AG04449 (cell line): ENCODE measurements at regions of chr19 and their contacts with region 1.

Region 1: DNA sequence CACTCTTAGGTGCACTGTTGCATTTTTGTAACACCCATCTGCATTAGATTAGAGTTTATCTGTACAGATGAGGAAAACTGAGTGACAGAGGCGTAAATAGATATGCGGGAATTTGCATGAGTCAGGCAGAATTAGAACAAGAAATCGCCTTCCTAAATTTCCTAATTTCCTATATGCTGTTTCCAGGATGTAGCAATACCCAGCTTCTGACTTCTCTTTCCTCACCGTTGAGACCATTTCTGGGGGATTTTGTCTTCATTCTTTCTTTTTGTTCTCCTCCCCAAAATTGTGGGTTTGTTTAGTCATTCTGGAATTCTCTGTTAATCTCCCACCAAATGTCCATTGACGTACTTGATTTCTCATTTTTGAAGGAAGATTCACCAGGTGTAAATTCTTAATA is 10.6 kb upstream of the ZNF792 start:
- DNase-seq: no peak
- H3K4me3 ChIP-seq: no peak overlapping the region
- CTCF ChIP-seq: no peak

Region 2: DNA sequence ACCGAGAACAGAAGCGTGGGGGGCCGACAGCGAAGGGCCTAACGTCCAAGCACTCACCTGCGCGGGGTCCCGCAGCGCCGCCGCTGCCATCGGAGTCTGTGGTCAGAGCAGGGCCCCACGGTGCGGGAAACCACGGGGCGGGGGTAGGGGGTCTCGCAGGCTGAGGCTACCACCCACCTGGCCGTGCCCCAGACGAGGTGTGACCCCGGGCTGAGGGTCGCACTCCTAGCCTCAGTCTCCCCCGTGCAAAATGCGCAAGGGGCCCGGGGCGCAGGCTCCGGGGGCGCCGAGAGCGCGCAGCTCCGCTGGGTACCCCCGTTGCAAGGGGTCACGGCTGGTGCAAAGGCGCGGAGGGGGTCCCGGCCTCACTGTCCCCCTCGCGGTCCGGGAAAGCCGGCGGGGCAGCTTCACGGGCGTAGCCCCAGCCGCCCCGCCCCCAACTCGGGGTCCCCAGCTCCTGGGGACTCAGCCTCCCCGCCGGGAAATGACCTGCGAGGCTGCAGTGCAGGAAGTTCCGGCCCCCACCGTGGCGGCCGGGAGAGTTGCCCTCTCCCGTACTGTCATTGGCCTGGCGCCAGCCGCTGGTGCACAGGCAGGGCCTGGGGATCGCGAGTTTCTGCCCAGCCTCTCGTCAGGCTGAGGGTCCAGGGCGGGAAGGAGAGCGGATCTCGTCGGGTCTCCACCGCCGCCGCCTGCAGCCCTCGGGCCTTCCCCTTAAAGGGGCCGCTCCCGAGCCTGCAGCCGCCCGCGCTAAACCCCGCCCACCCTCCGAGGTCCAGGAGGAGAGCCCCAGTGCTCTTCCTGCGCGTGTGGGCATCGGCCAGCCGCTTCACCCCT is 10.9 kb before region 1 on chr19 and contains the start of gene ZNF792:
- CTCF ChIA-PET with region 1: interaction called, 35 read pairs
- POLR2A ChIA-PET with region 1: no interaction called
- DNase-seq: no peak
- H3K4me3 ChIP-seq: peak within 1 kb of the TSS; percentile 75
- CTCF ChIP-seq: no peak

Region 3: GRCh38 chr19:34985249-34986022 is 10.8 kb after region 1 on chr19:
- CTCF ChIA-PET with region 1: interaction called, 19 read pairs
- POLR2A ChIA-PET with region 1: no interaction called
- DNase-seq: no peak
- H3K4me3 ChIP-seq: no peak overlapping the region
- CTCF ChIP-seq: no peak

Region 4: DNA sequence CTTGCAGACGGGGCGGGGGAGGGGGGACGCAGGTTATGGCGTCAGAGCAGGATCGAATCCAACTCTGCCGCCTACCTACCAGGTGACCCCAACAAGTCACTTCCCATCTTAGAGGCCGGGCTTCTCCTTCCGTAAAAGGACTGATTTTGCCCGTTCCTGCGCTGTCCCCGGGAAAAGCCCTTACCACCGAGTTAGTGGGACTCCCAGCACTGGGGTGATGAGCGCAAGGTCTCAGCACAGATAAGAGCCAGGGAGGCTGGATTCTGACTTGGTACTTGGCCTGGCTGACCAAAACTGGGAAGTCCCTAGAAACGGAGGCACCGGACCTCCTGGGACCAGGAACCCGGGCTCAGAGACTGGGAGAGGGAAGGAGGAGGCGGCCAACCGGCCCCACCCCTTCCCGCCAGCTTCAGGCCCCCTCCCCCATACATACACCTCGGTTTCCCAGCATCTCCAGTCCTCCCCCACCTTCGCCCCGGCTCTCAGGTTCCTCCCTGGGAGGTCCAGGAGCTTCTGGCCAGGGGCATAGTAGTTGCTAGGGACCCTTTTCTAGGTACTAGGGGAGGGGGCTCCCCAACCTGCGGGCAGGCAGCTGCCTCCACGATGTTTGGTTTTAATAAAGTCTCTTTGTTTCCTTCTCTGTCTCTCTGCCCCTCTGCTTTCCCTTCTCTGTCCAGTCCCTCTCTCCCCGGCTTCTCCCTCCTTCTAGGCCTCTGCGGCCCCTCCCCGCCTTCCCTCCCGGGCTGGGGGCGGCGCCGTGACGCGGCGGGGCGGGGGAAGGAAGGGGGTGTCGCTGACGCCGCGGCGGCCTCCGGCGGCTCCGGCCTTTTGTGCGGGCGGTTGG is 25.1 kb after region 1 on chr19 and contains the start of gene GRAMD1A:
- CTCF ChIA-PET with region 1: interaction called, 10 read pairs
- POLR2A ChIA-PET with region 1: no interaction called
- DNase-seq: no peak
- H3K4me3 ChIP-seq: peak within 1 kb of the TSS; percentile 73
- CTCF ChIP-seq: no peak

Region 5: GRCh38 chr19:35006342-35007018 is 31.8 kb after region 1 on chr19:
- CTCF ChIA-PET with region 1: interaction called, 67 read pairs
- POLR2A ChIA-PET with region 1: no interaction called
- DNase-seq: no peak
- H3K4me3 ChIP-seq: no peak overlapping the region
- CTCF ChIP-seq: no peak

Region 6: DNA sequence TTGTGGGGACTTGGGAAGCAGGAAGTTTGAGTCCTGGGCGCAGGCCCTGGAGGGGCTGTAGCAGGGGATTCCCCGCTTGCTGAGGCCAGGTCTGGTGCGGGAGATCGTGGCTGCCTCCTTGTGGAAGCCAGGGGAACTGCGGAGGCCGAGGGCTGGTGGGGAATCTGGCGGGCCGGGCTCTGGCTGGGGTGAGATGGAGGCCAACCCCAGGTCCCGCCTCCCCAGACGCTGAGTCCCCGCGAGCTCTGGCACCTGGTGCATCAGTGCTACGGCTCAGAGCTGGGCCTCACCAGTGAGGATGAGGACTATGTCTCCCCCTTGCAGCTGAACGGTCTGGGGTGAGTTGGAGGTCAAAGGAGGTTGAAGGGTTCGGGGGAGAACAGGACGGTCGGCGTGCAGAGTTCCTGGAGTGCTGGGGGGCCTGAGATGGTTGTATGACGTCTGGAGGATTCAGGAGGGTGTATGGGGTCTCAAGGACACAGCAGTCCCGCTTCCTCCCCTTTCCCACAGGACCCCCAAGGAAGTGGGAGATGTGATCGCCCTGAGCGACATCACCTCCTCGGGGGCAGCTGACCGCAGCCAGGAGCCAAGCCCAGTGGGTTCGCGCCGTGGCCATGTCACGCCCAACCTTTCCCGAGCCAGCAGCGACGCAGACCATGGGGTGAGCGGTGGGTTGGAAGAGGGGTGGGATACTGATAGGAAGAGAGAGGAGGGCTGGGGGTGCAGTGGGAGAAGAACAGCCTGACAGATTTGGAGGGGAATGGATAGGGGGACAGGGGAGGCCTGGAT is 38.6 kb after region 1 on chr19:
- CTCF ChIA-PET with region 1: interaction called, 67 read pairs
- POLR2A ChIA-PET with region 1: no interaction called
- DNase-seq: no peak
- H3K4me3 ChIP-seq: no peak overlapping the region
- CTCF ChIP-seq: peak; percentile 96

Region 7: GRCh38 chr19:35037716-35038622 is 63.3 kb after region 1 on chr19:
- CTCF ChIA-PET with region 1: interaction called, 16 read pairs
- POLR2A ChIA-PET with region 1: no interaction called
- DNase-seq: no peak
- H3K4me3 ChIP-seq: no peak overlapping the region
- CTCF ChIP-seq: no peak